CD4-positive, alpha-beta T cell (primary cell): ENCODE measurements at regions of chr18 and their contacts with region 1.

Region 1: DNA sequence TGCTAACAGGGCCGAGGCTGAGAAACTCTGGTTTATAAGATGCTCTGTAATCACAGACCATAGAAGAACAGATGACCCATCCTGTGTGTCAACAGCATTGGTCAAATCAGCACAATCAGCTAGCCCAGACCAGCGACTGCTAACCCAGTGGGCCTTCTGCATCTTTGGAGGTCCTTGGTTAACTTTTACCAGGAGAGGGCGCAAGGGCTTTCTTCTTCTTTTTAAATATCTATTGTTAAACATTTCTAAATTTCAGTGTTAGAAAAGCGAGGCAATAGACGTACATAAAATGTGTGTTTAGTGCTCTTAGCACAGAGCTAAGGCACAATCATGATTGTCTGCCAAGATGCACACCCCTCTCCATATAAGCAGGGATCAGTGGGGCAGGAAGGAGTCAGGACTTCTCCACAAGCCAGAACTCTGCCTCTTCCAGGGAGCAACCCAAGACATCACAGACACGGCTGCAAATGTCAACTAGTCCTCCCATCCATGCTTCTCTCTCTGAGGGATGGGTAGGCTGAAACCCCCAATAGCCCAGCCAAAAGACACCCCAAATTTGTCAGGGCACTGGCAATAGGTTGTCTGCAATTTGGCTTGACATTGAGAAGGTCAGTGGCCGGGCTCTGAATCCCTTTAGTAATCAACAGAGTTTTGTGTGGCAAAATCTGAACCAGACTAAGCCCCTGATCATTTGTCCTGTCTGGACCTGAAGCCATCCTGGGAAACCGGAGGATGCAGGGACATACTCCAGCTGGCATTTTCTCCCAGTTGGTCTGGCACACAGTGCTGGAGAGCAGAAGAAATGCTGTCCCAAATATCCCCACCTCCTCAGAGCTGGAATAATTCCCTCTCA is 188.2 kb downstream of the BCL2 start:
- DNase-seq: peak; percentile 35 to 81 (median 52)
- ATAC-seq: peak; percentile 74
- H3K4me3 ChIP-seq: no peak overlapping the region
- H3K4me3 Mint-ChIP-seq: peak overlapping the region; percentile 13
- H3K27ac ChIP-seq: no peak overlapping the region
- H3K27ac Mint-ChIP-seq: peak overlapping the region; percentile 36
- H3K4me1 ChIP-seq: peaks cover 26% of the 10 kb centered on the region
- H3K4me1 Mint-ChIP-seq: peaks cover 31% of the 10 kb centered on the region
- H3K27me3 ChIP-seq: no peaks in the 10 kb centered on the region
- H3K27me3 Mint-ChIP-seq: no peaks in the 10 kb centered on the region
- CTCF ChIP-seq: peak; percentile 82

Region 2: DNA sequence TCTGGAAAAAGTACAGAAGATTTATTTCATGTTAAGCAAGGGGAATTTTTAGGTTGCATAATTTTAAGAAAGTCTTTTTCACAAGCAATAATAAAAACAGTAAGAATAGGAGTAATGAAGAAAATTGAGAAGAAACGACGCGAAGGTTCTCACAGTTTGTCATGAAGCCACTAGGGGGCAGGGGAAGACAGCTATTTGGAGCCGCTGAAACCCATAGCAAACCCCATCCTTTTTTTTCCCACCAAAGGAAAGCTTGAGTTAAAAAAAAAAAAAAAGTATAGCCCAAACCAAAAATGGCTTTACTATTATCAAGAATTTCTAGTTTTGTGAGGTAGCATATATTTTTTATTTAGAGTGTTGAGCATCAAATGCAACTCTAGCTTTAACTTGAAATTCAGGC is 115.1 kb before region 1 on chr18:
- CTCF ChIA-PET with region 1: no interaction called
- POLR2A ChIA-PET with region 1: interaction called, 3 read pairs
- intact Hi-C with region 1: loop called in 1 of 2 experiments (anchors 1 kb)
- DNase-seq: peak in 13 of 14 experiments; percentile 10 to 81 (median 33)
- ATAC-seq: peak; percentile 71
- H3K4me3 ChIP-seq: no peak overlapping the region
- H3K4me3 Mint-ChIP-seq: no peak overlapping the region
- H3K27ac ChIP-seq: no peak overlapping the region
- H3K27ac Mint-ChIP-seq: no peak overlapping the region
- H3K4me1 ChIP-seq: no peaks in the 10 kb centered on the region
- H3K4me1 Mint-ChIP-seq: no peaks in the 10 kb centered on the region
- H3K27me3 ChIP-seq: no peaks in the 10 kb centered on the region
- H3K27me3 Mint-ChIP-seq: peaks cover 9% of the 10 kb centered on the region
- CTCF ChIP-seq: peak; percentile 81

Region 3: GRCh38 chr18:63155169-63155852 is 24.0 kb after region 1 on chr18:
- CTCF ChIA-PET with region 1: interaction called, 33 read pairs
- POLR2A ChIA-PET with region 1: interaction called, 4 read pairs
- intact Hi-C with region 1: loop called in 1 of 2 experiments (anchors 1 kb)
- DNase-seq: peak; percentile 63 to 90 (median 76)
- ATAC-seq: peak; percentile 75
- H3K4me3 ChIP-seq: peak overlapping the region; percentile 51
- H3K4me3 Mint-ChIP-seq: peak overlapping the region; percentile 85
- H3K27ac ChIP-seq: peak overlapping the region; percentile 95 to 96
- H3K27ac Mint-ChIP-seq: peak overlapping the region; percentile 91
- H3K4me1 ChIP-seq: peaks cover 97% of the 10 kb centered on the region
- H3K4me1 Mint-ChIP-seq: peaks cover 100% of the 10 kb centered on the region
- H3K27me3 ChIP-seq: no peaks in the 10 kb centered on the region
- H3K27me3 Mint-ChIP-seq: no peaks in the 10 kb centered on the region
- CTCF ChIP-seq: peak; percentile 94

Region 4: DNA sequence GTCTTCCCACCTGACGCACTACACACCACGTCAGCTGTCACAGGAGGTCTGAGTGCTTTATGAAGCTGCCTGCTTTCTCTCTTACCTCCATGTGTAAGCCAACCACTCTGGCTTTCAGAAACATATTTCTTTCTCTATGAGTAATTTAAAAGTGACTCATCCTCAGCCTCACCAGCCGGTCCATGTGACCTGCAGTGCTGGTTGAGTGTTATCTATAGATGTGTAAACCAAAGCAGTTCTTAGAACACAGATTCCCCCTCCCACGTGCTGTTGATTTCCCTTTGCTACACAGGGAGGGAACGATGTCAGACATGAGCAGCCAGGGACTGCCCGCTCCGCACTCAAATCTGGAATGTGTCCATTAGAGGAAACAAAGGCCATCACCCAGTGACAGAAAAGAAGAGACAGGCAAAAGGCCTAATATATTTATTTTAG is 30.4 kb after region 1 on chr18:
- CTCF ChIA-PET with region 1: interaction called, 11 read pairs
- POLR2A ChIA-PET with region 1: interaction called, 4 read pairs
- intact Hi-C with region 1: no loop called
- DNase-seq: peak; percentile 66 to 94 (median 74)
- ATAC-seq: peak; percentile 84
- H3K4me3 ChIP-seq: peak overlapping the region; percentile 38
- H3K4me3 Mint-ChIP-seq: peak overlapping the region; percentile 65
- H3K27ac ChIP-seq: peak overlapping the region; percentile 95 to 96
- H3K27ac Mint-ChIP-seq: peak overlapping the region; percentile 91
- H3K4me1 ChIP-seq: peaks cover 81% of the 10 kb centered on the region
- H3K4me1 Mint-ChIP-seq: peaks cover 78% of the 10 kb centered on the region
- H3K27me3 ChIP-seq: no peaks in the 10 kb centered on the region
- H3K27me3 Mint-ChIP-seq: no peaks in the 10 kb centered on the region
- CTCF ChIP-seq: no peak

Region 5: GRCh38 chr18:63439334-63439733 is 308.0 kb after region 1 on chr18:
- CTCF ChIA-PET with region 1: interaction called, 4 read pairs
- POLR2A ChIA-PET with region 1: no interaction called
- intact Hi-C with region 1: loop called (anchors 1 to 2 kb)
- DNase-seq: peak; percentile 7 to 79 (median 32)
- ATAC-seq: peak; percentile 79
- H3K4me3 ChIP-seq: no peak overlapping the region
- H3K4me3 Mint-ChIP-seq: no peak overlapping the region
- H3K27ac ChIP-seq: no peak overlapping the region
- H3K27ac Mint-ChIP-seq: no peak overlapping the region
- H3K4me1 ChIP-seq: no peaks in the 10 kb centered on the region
- H3K4me1 Mint-ChIP-seq: no peaks in the 10 kb centered on the region
- H3K27me3 ChIP-seq: no peaks in the 10 kb centered on the region
- H3K27me3 Mint-ChIP-seq: peaks cover 21% of the 10 kb centered on the region
- CTCF ChIP-seq: peak; percentile 95